AG04450 (cell line): ENCODE measurements at regions of chr7 and their contacts with region 1.

Region 1: GRCh38 chr7:28389504-28390395 is 22.6 kb upstream of the CREB5 start:
- DNase-seq: peak; percentile 39
- H3K4me3 ChIP-seq: peak overlapping the region; percentile 48
- H3K27ac ChIP-seq: no peak overlapping the region
- H3K27me3 ChIP-seq: no peaks in the 10 kb centered on the region
- CTCF ChIP-seq: peak; percentile 75

Region 2: GRCh38 chr7:28041491-28042314 is 348.0 kb before region 1 on chr7:
- CTCF ChIA-PET with region 1: no interaction called
- POLR2A ChIA-PET with region 1: no interaction called
- DNase-seq: peak; percentile 53
- H3K4me3 ChIP-seq: no peak overlapping the region
- H3K27ac ChIP-seq: peak overlapping the region; percentile 83
- H3K27me3 ChIP-seq: no peaks in the 10 kb centered on the region
- CTCF ChIP-seq: no peak

Region 3: DNA sequence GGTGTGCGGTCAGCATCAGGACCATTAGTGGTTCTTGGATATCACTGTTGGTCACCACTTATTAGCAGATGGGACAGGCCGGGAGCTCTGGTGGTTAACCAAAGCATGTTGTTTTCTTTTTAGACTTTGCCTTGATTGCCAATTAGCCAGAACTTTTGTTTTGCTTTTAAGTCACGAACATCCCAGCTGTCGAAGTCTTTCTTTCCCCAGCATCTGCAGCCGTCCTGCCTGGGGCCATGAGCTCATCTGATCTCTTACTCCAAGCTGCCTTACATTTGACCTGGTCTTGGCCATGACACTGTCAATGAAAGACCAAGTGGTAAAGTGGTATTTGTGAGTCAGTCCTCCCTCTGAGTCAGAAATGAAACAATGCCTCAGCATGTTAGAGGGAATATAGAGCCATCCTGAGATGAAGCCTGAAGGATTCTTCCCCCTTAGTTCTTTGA is 31.3 kb before region 1 on chr7:
- CTCF ChIA-PET with region 1: interaction called, 28 read pairs
- POLR2A ChIA-PET with region 1: no interaction called
- DNase-seq: peak; percentile 96
- H3K4me3 ChIP-seq: no peak overlapping the region
- H3K27ac ChIP-seq: peak overlapping the region; percentile 89
- H3K27me3 ChIP-seq: no peaks in the 10 kb centered on the region
- CTCF ChIP-seq: no peak

Region 4: GRCh38 chr7:28378574-28379149 is 11.1 kb before region 1 on chr7:
- CTCF ChIA-PET with region 1: interaction called, 45 read pairs
- POLR2A ChIA-PET with region 1: no interaction called
- DNase-seq: no peak
- H3K4me3 ChIP-seq: no peak overlapping the region
- H3K27ac ChIP-seq: no peak overlapping the region
- H3K27me3 ChIP-seq: no peaks in the 10 kb centered on the region
- CTCF ChIP-seq: no peak

Region 5: DNA sequence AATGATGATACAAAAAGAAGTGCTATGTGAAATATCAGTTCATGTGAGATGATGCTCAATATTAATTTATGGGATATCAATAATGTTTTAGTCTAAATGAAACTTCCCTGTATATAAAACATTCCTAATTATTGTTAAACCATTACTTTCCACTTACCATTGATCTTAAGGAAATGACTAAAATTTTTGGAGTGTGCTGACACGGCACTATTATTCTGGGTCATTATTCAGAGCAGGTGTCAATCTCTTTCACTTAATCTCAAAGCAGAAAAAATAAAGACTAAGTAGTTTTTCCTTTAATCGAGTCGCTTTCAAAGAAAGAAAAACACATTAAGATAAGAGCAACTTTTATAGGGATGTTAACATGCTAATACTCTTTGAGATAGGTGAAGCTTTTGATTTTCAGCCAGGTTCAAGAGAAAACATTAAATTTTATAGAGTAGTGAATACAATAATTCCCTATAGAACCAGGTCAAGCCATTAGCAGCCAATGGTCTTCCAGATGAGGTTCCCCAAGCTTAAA is 11.1 kb after region 1 on chr7:
- CTCF ChIA-PET with region 1: interaction called, 10 read pairs
- POLR2A ChIA-PET with region 1: no interaction called
- DNase-seq: no peak
- H3K4me3 ChIP-seq: no peak overlapping the region
- H3K27ac ChIP-seq: no peak overlapping the region
- H3K27me3 ChIP-seq: no peaks in the 10 kb centered on the region
- CTCF ChIP-seq: no peak

Region 6: GRCh38 chr7:28626624-28627262 is 237.0 kb after region 1 on chr7:
- CTCF ChIA-PET with region 1: interaction called, 15 read pairs
- POLR2A ChIA-PET with region 1: no interaction called
- DNase-seq: no peak
- H3K4me3 ChIP-seq: no peak overlapping the region
- H3K27ac ChIP-seq: no peak overlapping the region
- H3K27me3 ChIP-seq: no peaks in the 10 kb centered on the region
- CTCF ChIP-seq: peak; percentile 66

Region 7: DNA sequence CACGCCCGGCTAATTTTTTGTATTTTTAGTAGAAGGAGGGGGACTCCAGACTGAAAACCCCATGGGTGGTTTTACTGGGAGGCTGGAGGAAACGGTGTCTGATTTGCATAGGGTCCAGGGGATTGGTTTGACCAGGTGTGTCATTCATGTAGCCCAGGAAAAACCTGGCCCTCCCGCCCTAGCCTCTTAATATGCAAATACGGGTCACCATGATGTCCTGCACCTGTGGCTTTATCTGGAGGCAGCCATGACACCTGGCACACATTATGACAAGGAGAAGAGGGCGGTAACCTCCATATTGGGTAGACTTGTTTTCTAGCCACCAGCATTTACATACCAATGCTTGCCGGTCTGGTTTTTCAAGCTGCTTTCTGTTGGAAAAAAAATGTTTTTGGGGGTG is 500.4 kb after region 1 on chr7:
- CTCF ChIA-PET with region 1: no interaction called
- POLR2A ChIA-PET with region 1: no interaction called
- DNase-seq: no peak
- H3K4me3 ChIP-seq: no peak overlapping the region
- H3K27ac ChIP-seq: no peak overlapping the region
- H3K27me3 ChIP-seq: peaks cover 5% of the 10 kb centered on the region
- CTCF ChIP-seq: no peak